ENCODE measurements at regions of chr2 and their contacts with region 1.

Region 1: GRCh38 chr2:36663851-36664695 is 32.4 kb upstream of the VIT start:
- DNase-seq: no peak
- H3K4me3 ChIP-seq: no peak overlapping the region
- H3K27ac ChIP-seq: no peak overlapping the region
- H3K4me1 ChIP-seq: no peaks in the 10 kb centered on the region
- H3K27me3 ChIP-seq: peaks cover 4% of the 10 kb centered on the region
- CTCF ChIP-seq: peak; percentile 63 to 79 (median 73)
- EP300 ChIP-seq: no peak
- POLR2A ChIP-seq: no peak

Region 2: DNA sequence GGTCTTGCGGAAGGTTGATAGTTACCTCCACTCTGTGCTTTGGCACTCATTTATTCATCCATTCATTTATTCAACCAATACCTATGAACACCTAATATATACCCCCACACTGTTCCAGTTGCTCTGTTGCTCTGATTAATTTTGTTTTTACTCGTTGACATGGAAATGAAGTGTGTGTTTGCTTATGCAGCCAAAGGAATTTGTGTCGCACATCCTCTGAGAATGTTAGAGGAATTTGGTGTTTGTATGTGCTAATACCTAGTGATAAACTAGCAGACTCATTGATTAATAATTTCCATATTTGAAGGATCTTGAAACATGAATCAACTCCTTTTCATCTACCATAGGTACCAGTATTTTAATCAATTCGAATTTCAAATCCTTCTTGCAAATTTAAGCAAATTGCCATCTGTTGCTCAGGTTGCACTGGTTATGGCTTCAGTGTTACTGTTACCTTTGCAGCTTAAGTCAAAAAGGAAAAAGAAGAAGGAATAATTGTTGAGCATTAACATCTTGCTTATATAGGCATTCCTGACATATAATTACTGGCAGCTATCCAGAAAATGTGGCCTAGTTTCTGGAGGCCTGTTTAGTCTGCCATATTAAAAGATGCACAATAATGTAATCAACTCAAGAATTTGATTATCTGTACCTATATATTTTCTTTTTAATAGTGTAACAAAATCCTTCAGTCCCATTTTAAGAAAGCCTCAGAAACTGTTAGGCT is 334.2 kb before region 1 on chr2:
- in situ Hi-C with region 1: loop called in 1 of 4 experiments (anchors 25 kb)
- intact Hi-C with region 1: no loop called
- DNase-seq: no peak
- H3K4me3 ChIP-seq: no peak overlapping the region
- H3K27ac ChIP-seq: no peak overlapping the region
- H3K4me1 ChIP-seq: no peaks in the 10 kb centered on the region
- H3K27me3 ChIP-seq: no peaks in the 10 kb centered on the region
- CTCF ChIP-seq: no peak
- EP300 ChIP-seq: no peak
- POLR2A ChIP-seq: no peak

Region 3: GRCh38 chr2:36507408-36507812 is 156.7 kb before region 1 on chr2:
- in situ Hi-C with region 1: loop called in 2 of 4 experiments (anchors 25 kb)
- intact Hi-C with region 1: no loop called
- DNase-seq: peak; percentile 47
- H3K4me3 ChIP-seq: no peak overlapping the region
- H3K27ac ChIP-seq: no peak overlapping the region
- H3K4me1 ChIP-seq: no peaks in the 10 kb centered on the region
- H3K27me3 ChIP-seq: no peaks in the 10 kb centered on the region
- CTCF ChIP-seq: peak; percentile 44 to 64 (median 60)
- EP300 ChIP-seq: no peak
- POLR2A ChIP-seq: no peak